ENCODE measurements at regions of chr9 and their contacts with region 1.

Region 1: DNA sequence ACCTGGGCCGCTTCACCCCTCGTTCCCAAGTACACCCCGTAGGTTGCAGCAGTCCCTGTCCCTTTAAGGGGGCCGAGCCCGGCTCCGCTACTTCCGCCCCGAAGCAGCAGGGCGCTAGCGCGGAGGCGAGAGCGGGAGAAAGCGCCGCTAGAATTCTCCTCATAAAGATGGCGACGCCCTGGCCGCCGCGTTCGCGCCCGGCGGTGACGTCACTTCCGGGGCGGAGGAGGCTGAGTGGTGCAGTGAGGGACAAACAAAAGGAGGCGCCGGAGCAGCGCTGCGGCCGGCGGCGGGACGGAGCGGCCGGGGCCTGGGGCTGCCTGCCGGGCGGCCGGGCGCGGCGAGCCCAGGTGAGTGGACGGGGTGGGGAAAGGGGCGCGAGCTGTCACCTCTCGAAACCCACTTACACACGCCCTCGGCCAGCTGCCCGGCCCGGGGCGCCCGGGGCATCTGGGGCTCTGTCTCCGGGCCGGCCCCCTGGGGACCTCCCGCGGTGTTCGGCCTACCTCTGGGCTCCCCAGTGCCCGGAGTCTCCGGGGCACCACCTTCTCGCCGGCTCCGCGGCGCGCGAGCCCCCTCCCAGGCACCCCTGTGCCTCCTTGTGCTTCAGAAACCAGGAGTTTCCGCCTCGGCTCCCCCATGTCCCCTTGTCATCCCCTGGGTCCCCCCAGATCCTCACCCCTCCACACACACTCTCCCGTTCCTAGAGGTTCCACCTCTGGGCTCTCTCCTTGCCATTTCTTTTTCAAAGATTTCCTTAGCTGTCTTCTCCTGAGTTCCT is at the starts of genes KYAT1 and LRRC8A:
- DNase-seq: peak; percentile 95
- H3K4me3 ChIP-seq: peak within 1 kb of the TSS; percentile 97 to 100
- H3K27ac ChIP-seq: peak within 1 kb of the TSS; percentile 97 to 98
- H3K4me1 ChIP-seq: peaks cover 19% of the 10 kb centered on the region
- H3K27me3 ChIP-seq: no peaks in the 10 kb centered on the region
- CTCF ChIP-seq: peak in 3 of 4 experiments; percentile 12 to 39 (median 30)
- POLR2A ChIP-seq: peak; percentile 86
- total RNA-seq, gene KYAT1: 13.1 to 24.1 TPM
- total RNA-seq, gene LRRC8A: 78.2 to 78.8 TPM

Region 2: GRCh38 chr9:128829477-128830251 is 52.4 kb before region 1 on chr9 and contains the start of gene SPOUT1:
- intact Hi-C with region 1: loop called (anchors 2 kb)
- DNase-seq: peak; percentile 93
- H3K4me3 ChIP-seq: peak within 1 kb of the TSS; percentile 67 to 80
- H3K27ac ChIP-seq: peak within 1 kb of the TSS; percentile 55 to 63
- H3K4me1 ChIP-seq: peaks cover 2% of the 10 kb centered on the region
- H3K27me3 ChIP-seq: no peaks in the 10 kb centered on the region
- CTCF ChIP-seq: peak in 1 of 4 experiments; percentile 21
- POLR2A ChIP-seq: peak; percentile 33
- total RNA-seq, gene SPOUT1: 45.8 to 47.5 TPM

Region 3: GRCh38 chr9:128921881-128922763 is 40.0 kb after region 1 on chr9:
- intact Hi-C with region 1: loop called (anchors 5 kb)
- DNase-seq: peak; percentile 42
- H3K4me3 ChIP-seq: peak overlapping the region; percentile 41 to 53
- H3K27ac ChIP-seq: peak overlapping the region; percentile 87 to 97
- H3K4me1 ChIP-seq: peaks cover 18% of the 10 kb centered on the region
- H3K27me3 ChIP-seq: no peaks in the 10 kb centered on the region
- CTCF ChIP-seq: peak in 2 of 4 experiments; percentile 8 to 38
- POLR2A ChIP-seq: peak; percentile 55